ENCODE measurements at regions of chr15 and their contacts with region 1.

Region 1: GRCh38 chr15:80679167-80680131 is 15.7 kb upstream of the ABHD17C start:
- DNase-seq: peak; percentile 84
- H3K4me3 Mint-ChIP-seq: peak overlapping the region; percentile 27
- H3K27ac Mint-ChIP-seq: peak overlapping the region; percentile 95
- H3K4me1 Mint-ChIP-seq: peaks cover 66% of the 10 kb centered on the region
- H3K27me3 Mint-ChIP-seq: no peaks in the 10 kb centered on the region
- CTCF ChIP-seq: no peak

Region 2: GRCh38 chr15:80599359-80599758 is 80.1 kb before region 1 on chr15:
- CTCF ChIA-PET with region 1: interaction called, 4 read pairs
- intact Hi-C with region 1: loop called (anchors 5 kb)
- DNase-seq: no peak
- H3K4me3 Mint-ChIP-seq: no peak overlapping the region
- H3K27ac Mint-ChIP-seq: peak overlapping the region; percentile 93
- H3K4me1 Mint-ChIP-seq: peaks cover 44% of the 10 kb centered on the region
- H3K27me3 Mint-ChIP-seq: no peaks in the 10 kb centered on the region
- CTCF ChIP-seq: no peak

Measured in Calu3 (cell line).